ENCODE measurements at regions of chr11 and their contacts with region 1.

Region 1: DNA sequence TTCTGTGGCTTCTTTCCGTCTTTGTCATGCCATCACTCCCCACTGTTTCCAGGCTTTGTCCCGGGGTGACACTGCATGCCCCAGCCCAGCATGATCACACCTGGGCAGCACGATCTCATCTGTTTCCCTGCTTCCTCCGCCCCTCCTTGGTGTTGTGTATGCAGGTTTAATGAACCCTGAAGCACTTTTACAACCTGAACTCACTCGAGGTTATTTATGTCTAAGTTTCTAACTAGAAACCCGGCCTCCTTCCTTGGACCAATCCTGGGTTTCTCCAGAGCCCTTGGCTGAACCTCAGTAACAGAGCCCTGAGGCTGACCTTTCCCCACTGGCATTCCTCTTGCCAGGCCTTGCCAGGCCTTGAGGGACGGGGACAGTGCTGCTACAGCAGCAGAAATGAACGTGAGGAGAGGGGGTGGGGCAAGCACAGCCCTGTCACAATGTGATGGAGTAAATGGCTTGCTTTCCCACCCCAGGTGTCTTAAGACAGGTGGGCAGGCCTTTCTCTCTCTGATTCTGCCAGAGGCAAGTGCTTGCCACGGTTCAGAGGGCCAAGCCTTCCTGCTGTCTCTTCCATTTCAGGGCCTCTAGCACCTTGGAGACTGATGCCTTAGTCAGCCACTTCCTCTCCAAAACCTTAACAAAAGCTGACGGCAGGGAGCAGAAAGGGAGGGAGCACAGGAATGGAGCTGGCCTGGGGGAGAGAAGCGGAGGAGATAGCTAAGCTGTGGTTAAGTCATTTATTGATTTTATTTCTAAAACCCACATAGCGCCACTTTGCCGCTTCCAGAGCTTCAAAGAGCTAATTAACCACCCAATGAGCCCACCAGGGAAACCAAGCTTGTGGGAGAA is 3.1 kb upstream of the PYGM start:
- DNase-seq: peak; percentile 53
- ATAC-seq: peak; percentile 18
- H3K4me3 Mint-ChIP-seq: peak overlapping the region; percentile 43
- H3K27ac Mint-ChIP-seq: peak overlapping the region; percentile 98
- H3K4me1 Mint-ChIP-seq: peaks cover 88% of the 10 kb centered on the region
- H3K27me3 Mint-ChIP-seq: no peaks in the 10 kb centered on the region
- CTCF ChIP-seq: no peak

Region 2: DNA sequence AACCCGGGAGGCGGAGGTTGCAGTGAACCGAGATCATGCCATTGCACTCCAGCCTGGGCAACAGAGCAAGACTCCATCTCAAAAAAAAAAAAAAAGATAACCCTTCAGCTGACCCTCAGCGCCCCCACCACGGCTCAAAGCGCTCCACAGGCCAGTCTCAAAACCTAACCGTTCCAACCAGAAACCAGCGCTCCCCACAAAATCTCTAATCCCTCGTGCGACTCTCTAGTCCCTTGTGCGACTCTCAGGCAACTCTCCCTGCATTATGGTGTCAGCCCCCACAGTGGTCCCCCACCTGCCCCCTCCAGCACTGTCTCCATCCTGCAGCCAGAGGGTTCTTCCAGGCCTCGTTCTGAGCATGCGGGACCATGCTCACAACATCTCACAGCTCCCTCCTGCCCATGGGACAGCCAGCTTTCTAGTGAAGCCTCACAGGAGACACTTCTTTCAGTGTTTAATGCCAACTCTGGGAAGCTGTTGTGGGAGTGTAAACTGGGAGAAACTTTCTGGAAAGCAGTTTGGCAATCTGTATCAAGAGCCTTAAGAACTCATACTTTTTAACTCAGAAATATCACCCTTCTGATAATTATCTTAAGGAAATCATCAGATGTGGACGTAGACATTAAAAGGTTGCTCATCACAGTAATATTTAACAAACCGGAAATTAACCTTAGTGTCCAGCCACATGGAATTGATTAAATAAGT is 14.8 kb before region 1 on chr11:
- CTCF ChIA-PET with region 1: interaction called, 150 read pairs
- POLR2A ChIA-PET with region 1: interaction called, 10 read pairs
- DNase-seq: no peak
- ATAC-seq: no peak
- H3K4me3 Mint-ChIP-seq: no peak overlapping the region
- H3K27ac Mint-ChIP-seq: no peak overlapping the region
- H3K4me1 Mint-ChIP-seq: peaks cover 16% of the 10 kb centered on the region
- H3K27me3 Mint-ChIP-seq: peaks cover 12% of the 10 kb centered on the region
- CTCF ChIP-seq: no peak

Region 3: DNA sequence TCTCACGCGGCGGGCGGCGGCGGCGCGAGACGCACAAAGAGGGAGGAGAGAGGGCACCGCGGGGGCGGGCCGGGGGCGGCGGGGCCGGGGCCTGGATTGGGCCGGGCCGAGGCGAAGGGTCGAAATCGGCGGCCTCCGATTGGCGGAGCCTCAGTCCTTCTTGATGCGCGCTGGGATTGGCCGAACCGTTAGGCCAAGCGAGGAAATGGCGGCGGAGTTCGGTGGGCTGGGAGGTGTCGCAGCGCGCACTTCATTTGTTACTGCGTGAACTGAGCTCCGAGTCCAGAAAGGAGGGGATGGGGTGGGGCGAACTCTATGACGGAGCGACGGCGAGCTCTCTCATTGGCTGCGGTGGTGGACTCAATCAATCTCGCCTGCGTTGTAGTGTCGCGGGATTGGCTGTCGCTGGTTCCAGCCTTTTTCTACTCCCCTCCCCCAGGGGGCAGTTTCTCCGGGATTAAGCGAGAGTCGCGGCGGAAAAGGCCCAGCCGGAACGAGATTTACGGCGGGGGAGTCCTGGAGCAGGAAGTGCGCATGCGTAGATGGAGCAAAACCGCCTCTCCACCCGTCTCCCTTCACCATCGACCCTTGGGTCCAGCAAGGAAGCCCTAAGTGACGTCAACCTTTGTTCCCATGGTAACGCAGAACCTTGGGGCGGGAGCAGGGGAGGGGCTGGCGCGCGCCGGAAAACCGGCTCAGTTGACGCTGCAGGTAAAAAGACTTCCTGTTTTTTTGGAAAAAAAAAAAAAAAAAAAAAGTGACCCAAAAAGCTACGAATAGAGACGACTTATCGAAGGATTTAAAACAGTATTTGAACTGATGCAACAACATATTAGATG is 15.8 kb after region 1 on chr11 and contains the start of gene SF1:
- CTCF ChIA-PET with region 1: interaction called, 19 read pairs
- POLR2A ChIA-PET with region 1: interaction called, 45 read pairs
- DNase-seq: peak; percentile 98
- ATAC-seq: peak; percentile 95
- H3K4me3 Mint-ChIP-seq: peak within 1 kb of the TSS; percentile 79
- H3K27ac Mint-ChIP-seq: peak within 1 kb of the TSS; percentile 98
- H3K4me1 Mint-ChIP-seq: peaks cover 32% of the 10 kb centered on the region
- H3K27me3 Mint-ChIP-seq: no peaks in the 10 kb centered on the region
- CTCF ChIP-seq: no peak
- total RNA-seq, gene SF1: 285 to 314 TPM (median 300 TPM) in 3 replicates